Heart left ventricle (tissue), 16 donors: ENCODE measurements at regions of chr10 and their contacts with region 1.

Region 1: DNA sequence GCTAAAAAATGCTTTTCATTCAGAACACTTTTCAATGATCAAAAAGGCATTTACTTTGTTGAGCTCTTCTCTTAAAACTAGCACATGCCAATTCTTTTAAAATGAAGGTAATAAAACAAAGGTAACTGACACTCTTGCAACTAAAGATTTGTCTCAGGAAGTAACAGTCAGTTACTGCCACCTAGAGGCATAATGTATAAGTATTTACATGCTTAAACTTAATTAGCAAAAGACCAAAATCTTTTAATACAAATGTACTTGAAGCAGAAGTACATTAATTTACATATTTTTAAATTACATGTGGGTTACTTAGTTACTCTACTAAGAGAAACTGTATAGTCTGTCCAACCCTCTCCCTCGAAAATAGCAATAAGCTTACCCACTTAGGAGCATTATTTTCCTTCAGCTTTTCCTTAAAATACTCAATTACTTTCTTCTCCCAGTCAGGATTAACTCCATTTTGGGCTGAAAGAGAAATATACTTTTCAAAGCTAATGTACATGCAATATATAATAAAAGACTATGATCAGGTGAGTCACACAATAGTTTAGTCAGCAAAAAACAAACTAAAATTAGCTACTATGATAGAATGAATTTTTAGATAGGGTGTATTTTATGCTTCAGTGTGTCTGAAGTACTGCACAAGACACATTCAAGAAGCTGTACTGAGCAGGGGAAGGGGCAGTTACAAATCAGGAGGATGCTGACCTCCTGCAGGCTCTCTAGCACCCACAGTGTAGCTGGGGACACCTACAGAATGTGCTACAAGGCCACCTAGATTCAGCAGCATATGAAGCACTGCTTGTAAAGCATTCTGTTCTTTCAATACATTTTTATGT is 13.0 kb downstream of the MCMBP start:
- DNase-seq: no peak
- ATAC-seq: peak in 1 of 4 donors; percentile 45
- H3K4me3 ChIP-seq: no peak overlapping the region
- H3K27ac ChIP-seq: no peak overlapping the region
- H3K4me1 ChIP-seq: peaks cover 0 to 9% (median 0%) of the 10 kb centered on the region in 12 donors
- H3K27me3 ChIP-seq: no peaks in the 10 kb centered on the region
- CTCF ChIP-seq: peak; percentile 55 to 75 (median 66)
- POLR2A ChIP-seq: no peak

Region 2: DNA sequence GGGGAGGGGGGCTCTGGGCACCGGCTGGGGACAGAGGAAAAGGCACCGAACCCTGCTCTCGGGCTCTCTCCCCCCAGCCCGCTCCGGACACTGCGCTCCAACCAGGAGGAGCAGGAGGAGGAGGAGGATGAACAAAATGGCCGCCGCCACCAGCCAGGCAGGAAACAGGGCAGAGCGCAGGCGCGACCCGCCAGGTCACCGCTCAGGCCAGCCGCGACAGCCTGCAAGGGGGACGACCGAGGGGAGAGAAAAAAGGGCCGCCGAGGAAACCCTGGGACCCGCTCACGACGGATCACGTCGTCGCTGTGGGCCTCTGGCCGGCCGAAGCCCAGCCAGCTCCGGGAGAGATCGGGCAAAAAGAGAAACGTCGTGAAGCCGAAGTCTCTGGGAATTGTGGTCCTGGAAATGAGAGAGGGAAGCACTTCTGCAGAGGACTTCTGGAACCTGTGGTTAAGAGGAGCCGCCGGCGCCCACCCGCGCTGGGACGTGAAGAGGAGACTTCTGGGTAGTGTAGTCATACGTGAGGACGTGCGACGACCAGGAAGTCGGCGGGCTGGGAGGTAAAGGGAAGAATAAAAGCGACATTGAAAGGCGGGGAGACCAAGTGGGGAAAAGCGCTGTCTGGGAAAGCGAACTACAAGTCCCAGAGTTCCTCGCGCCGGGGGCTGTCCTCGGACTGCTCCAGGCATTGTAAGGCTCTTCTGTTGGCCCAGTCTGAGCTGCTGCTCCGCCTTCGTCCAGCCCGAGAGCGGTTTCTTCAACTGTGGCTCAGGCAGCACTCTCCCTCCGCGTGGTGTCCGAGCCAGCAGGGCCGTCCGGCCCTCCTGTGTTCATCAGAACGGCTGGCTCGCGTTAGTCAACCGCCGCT is 262.9 kb before region 1 on chr10 and contains the start of gene TIAL1:
- intact Hi-C with region 1: loop called in 3 of 10 experiments (anchors 10 kb)
- DNase-seq: peak; percentile 97 to 99 (median 98)
- ATAC-seq: peak; percentile 94 to 97 (median 96)
- H3K4me3 ChIP-seq: peak within 1 kb of the TSS; percentile 66 to 91 (median 88)
- H3K27ac ChIP-seq: peak within 1 kb of the TSS; percentile 94 to 100 (median 99)
- H3K4me1 ChIP-seq: peaks cover 0 to 49% (median 43%) of the 10 kb centered on the region in 12 donors
- H3K27me3 ChIP-seq: no peaks in the 10 kb centered on the region
- CTCF ChIP-seq: no peak
- POLR2A ChIP-seq: peak; percentile 40 to 79
- total RNA-seq, gene TIAL1: 36.9 to 86.3 (median 67.3) TPM

Region 3: DNA sequence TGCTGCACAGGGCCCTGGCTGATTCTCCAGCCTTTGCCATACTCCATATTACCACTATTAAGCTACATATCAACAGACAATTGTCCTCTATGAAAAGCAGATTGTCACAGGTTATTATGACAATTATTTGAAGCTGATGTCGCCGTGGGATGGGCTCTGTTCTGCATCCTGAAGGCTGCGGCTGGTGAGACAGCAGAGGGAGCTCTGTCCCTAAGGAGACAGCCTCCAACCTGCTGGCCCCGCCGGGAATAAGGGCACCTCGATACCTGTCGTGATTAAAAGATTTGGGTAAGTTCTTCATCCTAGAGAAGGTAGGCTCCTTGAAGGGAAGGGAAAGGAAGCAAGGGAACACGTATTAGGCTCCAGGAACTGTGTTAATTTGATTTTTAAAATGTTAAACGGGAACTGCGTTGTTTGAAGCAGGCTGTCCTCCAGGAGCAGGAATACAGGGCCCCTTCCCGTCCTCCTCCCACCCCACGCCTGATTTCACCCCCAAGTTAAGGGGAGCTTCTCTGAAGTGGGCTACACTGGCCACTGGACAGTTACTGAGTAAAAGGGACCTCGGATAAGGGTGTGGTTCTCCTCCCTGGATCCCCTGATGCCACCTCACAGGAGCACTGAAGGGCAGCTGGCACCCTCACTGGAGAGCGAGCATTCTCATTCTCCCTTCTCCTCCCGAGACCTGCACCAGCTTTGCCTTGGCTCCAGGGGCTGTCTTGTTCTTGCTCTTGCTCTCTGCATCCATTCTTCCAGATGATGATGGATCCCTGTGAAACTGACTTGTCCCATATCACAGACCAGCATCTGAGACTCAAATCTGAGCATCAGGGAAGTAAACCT is 251.1 kb before region 1 on chr10:
- intact Hi-C with region 1: loop called in 9 of 10 experiments (anchors 1 to 10 kb)
- DNase-seq: peak; percentile 27 to 74 (median 46)
- ATAC-seq: peak; percentile 77 to 94 (median 86)
- H3K4me3 ChIP-seq: peak overlapping the region in 2 of 12 donors; percentile 14 to 16
- H3K27ac ChIP-seq: no peak overlapping the region
- H3K4me1 ChIP-seq: peaks cover 0 to 3% (median 0%) of the 10 kb centered on the region in 12 donors
- H3K27me3 ChIP-seq: no peaks in the 10 kb centered on the region
- CTCF ChIP-seq: peak; percentile 37 to 76 (median 63)
- POLR2A ChIP-seq: no peak

Region 4: GRCh38 chr10:119616882-119617570 is 242.6 kb before region 1 on chr10:
- intact Hi-C with region 1: loop called in 3 of 10 experiments (anchors 5 to 10 kb)
- DNase-seq: peak in 1 of 5 donors; percentile 33
- ATAC-seq: peak in 2 of 4 donors; percentile 33 to 64
- H3K4me3 ChIP-seq: no peak overlapping the region
- H3K27ac ChIP-seq: no peak overlapping the region
- H3K4me1 ChIP-seq: peaks cover 0 to 28% (median 7%) of the 10 kb centered on the region in 12 donors
- H3K27me3 ChIP-seq: no peaks in the 10 kb centered on the region
- CTCF ChIP-seq: peak in 6 of 12 donors; percentile 7 to 46 (median 24)
- POLR2A ChIP-seq: no peak

Region 5: DNA sequence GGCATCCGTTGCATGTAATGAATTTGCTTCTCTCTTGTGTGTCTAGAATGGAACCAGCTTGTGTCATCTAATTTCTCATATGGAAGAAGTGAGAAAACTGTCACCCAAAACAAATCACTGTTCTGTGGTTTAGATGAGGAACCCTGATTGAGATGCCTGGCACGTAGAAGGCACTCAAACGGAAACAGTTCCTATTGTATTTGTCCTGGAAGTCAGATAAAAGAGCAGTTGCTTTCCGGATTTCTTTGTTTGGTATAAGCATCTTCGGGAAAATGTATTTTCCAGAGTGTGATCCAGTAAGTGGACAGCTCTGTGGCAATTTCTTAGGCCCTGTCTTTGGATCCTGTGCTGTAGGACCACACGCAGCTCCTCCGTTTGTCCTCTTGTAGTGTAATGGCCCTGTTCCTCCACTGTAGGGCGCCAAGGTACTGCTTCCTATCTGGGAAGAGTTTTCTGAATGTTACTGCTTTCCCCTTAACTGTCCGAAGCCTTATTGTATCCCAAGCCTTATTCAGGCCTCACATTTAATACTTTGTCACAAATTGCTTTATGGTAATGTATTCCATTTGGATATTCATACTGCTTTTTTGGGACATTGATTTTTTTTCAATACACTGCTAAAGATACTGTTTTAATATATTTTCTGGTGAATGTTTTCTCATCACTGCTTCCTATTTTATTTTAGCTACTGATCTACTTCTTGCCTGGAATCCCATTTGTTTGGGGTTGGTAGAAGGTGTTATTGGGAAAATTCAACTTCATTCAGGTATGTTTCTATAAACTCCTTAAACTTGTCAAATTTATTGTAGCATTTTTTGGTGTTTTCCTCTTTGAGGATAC is 109.0 kb before region 1 on chr10:
- intact Hi-C with region 1: loop called (anchors 1 to 5 kb)
- DNase-seq: peak in 4 of 5 donors; percentile 59 to 71 (median 64)
- ATAC-seq: peak; percentile 78 to 99 (median 95)
- H3K4me3 ChIP-seq: no peak overlapping the region
- H3K27ac ChIP-seq: no peak overlapping the region
- H3K4me1 ChIP-seq: peaks cover 0 to 10% (median 0%) of the 10 kb centered on the region in 12 donors
- H3K27me3 ChIP-seq: no peaks in the 10 kb centered on the region
- CTCF ChIP-seq: peak; percentile 76 to 98 (median 90)
- POLR2A ChIP-seq: no peak

Region 6: GRCh38 chr10:119759832-119760231 is 99.8 kb before region 1 on chr10:
- intact Hi-C with region 1: loop called in 1 of 10 experiments (anchors 5 kb)
- DNase-seq: no peak
- ATAC-seq: no peak
- H3K4me3 ChIP-seq: no peak overlapping the region
- H3K27ac ChIP-seq: peak overlapping the region in 1 of 12 donors; percentile 69
- H3K4me1 ChIP-seq: peaks cover 0 to 4% (median 0%) of the 10 kb centered on the region in 12 donors
- H3K27me3 ChIP-seq: no peaks in the 10 kb centered on the region
- CTCF ChIP-seq: no peak
- POLR2A ChIP-seq: no peak